Endothelial cell of umbilical vein (primary cell): ENCODE measurements at regions of chr1 and their contacts with region 1.

Region 1: GRCh38 chr1:33181921-33182341 is at the start of gene TRIM62:
- DNase-seq: peak; percentile 81
- H3K4me3 ChIP-seq: peak within 1 kb of the TSS; percentile 37 to 83 (median 64)
- H3K27ac ChIP-seq: no peak within 1 kb of the TSS
- H3K4me1 ChIP-seq: peaks cover 5% of the 10 kb centered on the region
- H3K27me3 ChIP-seq: peaks cover 15 to 20% of the 10 kb centered on the region in 2 experiments
- CTCF ChIP-seq: no peak
- POLR2A ChIP-seq: peak; percentile 64
- total RNA-seq, gene TRIM62: 8.3 and 8.6 TPM in 2 replicates

Region 2: DNA sequence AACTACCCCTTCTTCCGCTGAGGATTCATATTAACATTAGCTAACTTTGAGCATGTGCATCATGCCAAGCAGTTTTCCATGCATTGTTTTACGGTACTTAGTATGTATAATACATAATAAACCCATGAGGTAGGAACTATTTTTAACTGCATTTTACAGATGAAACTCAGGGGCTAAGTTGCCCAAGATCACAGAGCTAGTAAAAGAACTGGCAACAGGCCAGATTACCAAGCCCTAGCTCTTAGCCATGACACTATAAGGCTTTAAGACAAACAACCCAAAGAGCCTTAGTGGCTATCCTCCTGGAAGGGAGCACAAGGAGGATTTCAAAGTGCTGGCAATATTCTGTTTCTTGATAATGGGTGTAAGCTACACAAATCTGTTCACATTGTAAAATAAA is 151.4 kb before region 1 on chr1:
- CTCF ChIA-PET with region 1: no interaction called
- POLR2A ChIA-PET with region 1: no interaction called
- dilution Hi-C with region 1: no loop called
- intact Hi-C with region 1: no loop called
- DNase-seq: no peak
- H3K4me3 ChIP-seq: no peak overlapping the region
- H3K27ac ChIP-seq: no peak overlapping the region
- H3K4me1 ChIP-seq: peaks cover 6% of the 10 kb centered on the region
- H3K27me3 ChIP-seq: no peaks in the 10 kb centered on the region
- CTCF ChIP-seq: no peak
- POLR2A ChIP-seq: no peak

Region 3: GRCh38 chr1:33137800-33138199 is 44.1 kb before region 1 on chr1:
- CTCF ChIA-PET with region 1: interaction called, 20 read pairs
- POLR2A ChIA-PET with region 1: no interaction called
- dilution Hi-C with region 1: no loop called
- intact Hi-C with region 1: no loop called
- DNase-seq: peak; percentile 50
- H3K4me3 ChIP-seq: no peak overlapping the region
- H3K27ac ChIP-seq: no peak overlapping the region
- H3K4me1 ChIP-seq: no peaks in the 10 kb centered on the region
- H3K27me3 ChIP-seq: peaks cover 2 to 3% of the 10 kb centered on the region in 2 experiments
- CTCF ChIP-seq: peak; percentile 51 to 80
- POLR2A ChIP-seq: no peak

Region 4: DNA sequence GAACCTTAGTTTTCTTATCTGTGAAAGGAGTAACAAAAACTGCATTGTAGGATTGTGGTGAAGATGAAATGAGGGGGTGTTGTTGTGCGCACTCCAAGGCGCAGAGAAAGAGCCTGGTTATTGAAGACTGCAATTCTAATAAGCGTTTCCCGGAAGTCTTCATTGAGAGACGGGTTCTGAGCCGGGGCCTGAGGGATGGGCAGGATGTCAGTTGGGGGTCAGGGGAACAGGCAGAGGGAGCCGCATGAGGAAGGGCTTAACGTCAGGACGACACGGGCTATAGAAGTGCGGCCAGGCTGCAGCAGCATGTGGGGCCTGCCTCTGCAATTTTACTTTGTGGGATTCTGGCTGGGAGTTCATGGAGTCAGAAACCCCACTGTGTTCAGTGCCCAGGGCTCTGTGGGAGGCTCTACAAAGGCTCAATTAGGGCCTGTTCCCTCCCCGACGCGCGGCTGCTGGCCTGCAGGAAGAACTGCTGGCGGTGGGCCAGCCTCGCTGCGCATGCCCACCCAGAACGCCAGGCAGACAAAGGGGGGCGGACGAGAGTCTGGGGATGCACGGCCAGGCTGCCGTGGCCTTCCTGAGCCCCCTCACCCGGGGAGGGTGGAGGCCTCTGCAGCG is 20.8 kb before region 1 on chr1:
- CTCF ChIA-PET with region 1: interaction called, 5 read pairs
- POLR2A ChIA-PET with region 1: no interaction called
- dilution Hi-C with region 1: no loop called
- intact Hi-C with region 1: loop called (anchors 1 kb)
- DNase-seq: peak; percentile 66
- H3K4me3 ChIP-seq: no peak overlapping the region
- H3K27ac ChIP-seq: no peak overlapping the region
- H3K4me1 ChIP-seq: peaks cover 22% of the 10 kb centered on the region
- H3K27me3 ChIP-seq: no peaks in the 10 kb centered on the region
- CTCF ChIP-seq: no peak
- POLR2A ChIP-seq: no peak

Region 5: DNA sequence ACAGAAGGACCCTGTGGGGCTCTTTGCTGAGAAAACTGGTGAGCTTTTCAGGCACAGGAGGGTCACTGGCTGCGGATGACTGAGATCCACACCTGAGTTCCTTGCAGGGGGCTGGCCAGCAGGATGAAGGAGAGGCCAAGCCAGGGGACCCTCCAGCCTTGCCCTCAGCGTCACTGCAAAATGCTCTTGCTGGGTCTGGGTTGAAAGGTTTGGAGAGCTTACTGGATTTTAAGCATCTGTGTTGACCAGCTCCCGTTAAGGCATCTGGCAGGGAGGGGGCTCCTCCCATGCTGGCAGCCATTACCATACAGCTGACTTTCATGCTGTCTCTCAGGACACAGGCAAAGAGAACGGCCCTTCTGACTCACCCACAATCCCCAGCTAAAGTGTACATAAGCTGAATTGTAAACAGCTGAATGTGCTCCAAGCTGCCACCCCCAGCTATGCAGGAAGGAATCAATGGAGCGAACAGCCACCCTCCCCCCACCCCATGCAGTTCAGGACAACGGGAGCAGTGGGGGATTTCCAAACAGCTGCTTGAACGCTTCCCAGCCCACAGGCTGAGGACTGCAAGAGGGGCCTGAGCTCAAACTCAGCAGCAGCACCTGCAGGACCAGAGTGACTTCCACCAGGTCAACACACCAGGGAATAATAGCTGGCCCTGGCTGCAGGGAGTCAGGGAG is 160.3 kb after region 1 on chr1:
- CTCF ChIA-PET with region 1: no interaction called
- POLR2A ChIA-PET with region 1: no interaction called
- dilution Hi-C with region 1: no loop called
- intact Hi-C with region 1: loop called (anchors 2 kb)
- DNase-seq: peak; percentile 97
- H3K4me3 ChIP-seq: no peak overlapping the region
- H3K27ac ChIP-seq: peak overlapping the region; percentile 56
- H3K4me1 ChIP-seq: peaks cover 85% of the 10 kb centered on the region
- H3K27me3 ChIP-seq: no peaks in the 10 kb centered on the region
- CTCF ChIP-seq: no peak
- POLR2A ChIP-seq: no peak

Region 6: DNA sequence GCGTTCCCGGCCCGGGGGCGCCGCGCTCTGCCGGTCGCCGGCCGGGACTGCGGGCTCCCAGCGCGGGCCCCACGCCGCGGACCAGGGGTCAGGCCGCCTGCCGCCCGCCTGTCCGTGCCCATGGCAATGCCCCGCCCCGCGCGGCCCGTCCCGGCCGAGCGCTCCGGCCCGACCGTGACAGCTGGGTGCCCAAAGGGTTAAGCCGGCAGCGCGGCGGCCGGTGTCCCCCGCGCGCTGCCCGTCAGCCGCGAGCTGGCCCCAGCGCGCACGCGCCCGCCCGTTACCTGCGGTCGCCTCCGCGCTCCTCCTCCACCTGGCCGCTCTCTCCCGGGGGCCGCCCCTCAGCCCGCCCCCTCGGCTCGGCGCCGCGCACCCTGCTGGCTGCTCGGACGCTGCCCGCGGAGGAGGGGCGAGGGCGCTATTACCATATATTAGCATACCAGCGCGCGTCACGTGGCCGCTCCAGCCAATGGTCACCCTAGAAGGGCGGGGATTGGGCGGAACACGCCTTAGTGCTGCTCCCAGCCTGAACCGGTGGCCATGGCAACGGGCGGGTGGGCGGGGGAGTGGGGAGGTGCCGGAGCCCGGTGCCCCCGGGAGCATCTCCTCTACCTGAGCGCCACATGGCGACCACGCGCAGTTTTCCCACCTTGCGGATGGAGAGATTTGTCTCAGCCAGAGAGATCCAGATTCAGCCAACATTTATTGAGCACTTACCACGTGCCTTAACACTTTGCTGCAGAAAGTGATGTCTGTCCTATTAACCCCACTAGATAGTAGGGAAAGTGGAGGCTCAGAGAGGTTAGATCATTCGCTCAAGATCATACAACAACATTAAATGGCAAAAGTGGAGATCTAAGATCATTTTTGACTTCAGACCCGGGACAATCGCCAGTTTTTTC is 249.0 kb after region 1 on chr1 and contains the start of gene PHC2:
- CTCF ChIA-PET with region 1: no interaction called
- POLR2A ChIA-PET with region 1: interaction called, 3 read pairs
- dilution Hi-C with region 1: no loop called
- intact Hi-C with region 1: loop called (anchors 2 kb)
- DNase-seq: peak; percentile 96
- H3K4me3 ChIP-seq: peak within 1 kb of the TSS; percentile 36 to 66 (median 55)
- H3K27ac ChIP-seq: peak within 1 kb of the TSS; percentile 2
- H3K4me1 ChIP-seq: peaks cover 30% of the 10 kb centered on the region
- H3K27me3 ChIP-seq: no peaks in the 10 kb centered on the region
- CTCF ChIP-seq: peak in 1 of 2 donors; percentile 22
- POLR2A ChIP-seq: no peak
- total RNA-seq, gene PHC2: 79.0 and 82.3 TPM in 2 replicates